ENCODE measurements at regions of chr22 and their contacts with region 1.

Region 1: GRCh38 chr22:30289134-30289979 is at the start of gene CASTOR1:
- DNase-seq: peak; percentile 84 to 98 (median 96)
- H3K4me3 ChIP-seq: peak within 1 kb of the TSS; percentile 67 to 97 (median 90)
- H3K27ac ChIP-seq: peak within 1 kb of the TSS; percentile 59 to 97 (median 92)
- H3K27me3 ChIP-seq: no peaks in the 10 kb centered on the region
- CTCF ChIP-seq: peak in 26 of 56 donors; percentile 8 to 56 (median 26)
- total RNA-seq, gene CASTOR1: 4.6 to 43.5 (median 15.5) TPM

Region 2: GRCh38 chr22:30079952-30080533 is 209.3 kb before region 1 on chr22 and contains the start of gene HORMAD2:
- intact Hi-C with region 1: no loop called
- DNase-seq: peak in 5 of 10 donors; percentile 19 to 64 (median 44)
- H3K4me3 ChIP-seq: peak within 1 kb of the TSS in 57 of 59 donors; percentile 6 to 66 (median 46)
- H3K27ac ChIP-seq: peak within 1 kb of the TSS in 1 of 59 donors; percentile 18
- H3K27me3 ChIP-seq: peaks cover 0 to 18% (median 4%) of the 10 kb centered on the region in 45 donors
- CTCF ChIP-seq: no peak
- total RNA-seq, gene HORMAD2: 0.20 to 2.0 (median 0.59) TPM in 46 of 120 experiments, not detected in the others

Region 3: DNA sequence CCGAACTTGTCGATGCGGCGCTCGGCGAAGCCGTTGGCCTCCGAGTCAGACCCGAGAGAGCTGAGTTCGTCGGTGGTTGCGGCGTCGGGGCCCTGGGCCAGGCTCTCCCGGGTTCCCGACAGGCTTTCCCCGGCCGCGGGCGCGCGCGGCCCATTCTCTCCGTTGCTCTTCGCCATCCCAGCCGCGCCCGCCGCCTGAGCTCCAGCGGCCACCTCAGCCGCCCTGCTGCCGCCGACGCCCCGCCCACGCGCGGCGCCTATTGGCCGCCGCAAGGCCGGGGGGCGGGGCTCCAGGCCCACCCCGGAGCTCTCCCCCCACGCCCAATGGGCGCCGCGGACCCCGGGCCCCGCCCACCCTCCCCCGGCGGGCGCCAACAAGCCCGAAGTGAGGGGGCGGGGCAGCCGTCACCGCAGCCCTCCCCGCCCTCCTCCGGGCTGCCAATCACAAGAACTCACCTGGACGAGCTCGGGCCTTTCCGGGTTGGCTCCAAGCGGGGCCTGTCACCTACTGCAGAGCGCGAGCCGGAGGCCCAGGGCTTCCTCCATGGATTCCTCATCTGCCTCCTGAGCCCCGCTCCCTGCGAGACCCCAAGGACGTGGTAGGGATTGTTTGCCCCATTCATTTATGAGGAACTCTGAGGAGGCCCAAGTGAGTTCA is 37.5 kb after region 1 on chr22 and contains the start of gene TBC1D10A:
- intact Hi-C with region 1: loop called (anchors 2 kb)
- DNase-seq: peak; percentile 63 to 92 (median 82)
- H3K4me3 ChIP-seq: peak within 1 kb of the TSS; percentile 54 to 98 (median 92)
- H3K27ac ChIP-seq: peak within 1 kb of the TSS in 57 of 59 donors; percentile 9 to 90 (median 78)
- H3K27me3 ChIP-seq: no peaks in the 10 kb centered on the region
- CTCF ChIP-seq: peak in 6 of 56 donors; percentile 10 to 24 (median 12)
- total RNA-seq, gene TBC1D10A: 8.7 to 34.6 (median 16.2) TPM

Region 4: GRCh38 chr22:30332561-30332960 is 43.2 kb after region 1 on chr22:
- intact Hi-C with region 1: loop called (anchors 2 kb)
- DNase-seq: peak in 5 of 10 donors; percentile 44 to 61 (median 53)
- H3K4me3 ChIP-seq: no peak overlapping the region
- H3K27ac ChIP-seq: peak overlapping the region in 30 of 59 donors; percentile 1 to 69 (median 34)
- H3K27me3 ChIP-seq: no peaks in the 10 kb centered on the region
- CTCF ChIP-seq: peak in 4 of 56 donors; percentile 2 to 25 (median 10)

Region 5: DNA sequence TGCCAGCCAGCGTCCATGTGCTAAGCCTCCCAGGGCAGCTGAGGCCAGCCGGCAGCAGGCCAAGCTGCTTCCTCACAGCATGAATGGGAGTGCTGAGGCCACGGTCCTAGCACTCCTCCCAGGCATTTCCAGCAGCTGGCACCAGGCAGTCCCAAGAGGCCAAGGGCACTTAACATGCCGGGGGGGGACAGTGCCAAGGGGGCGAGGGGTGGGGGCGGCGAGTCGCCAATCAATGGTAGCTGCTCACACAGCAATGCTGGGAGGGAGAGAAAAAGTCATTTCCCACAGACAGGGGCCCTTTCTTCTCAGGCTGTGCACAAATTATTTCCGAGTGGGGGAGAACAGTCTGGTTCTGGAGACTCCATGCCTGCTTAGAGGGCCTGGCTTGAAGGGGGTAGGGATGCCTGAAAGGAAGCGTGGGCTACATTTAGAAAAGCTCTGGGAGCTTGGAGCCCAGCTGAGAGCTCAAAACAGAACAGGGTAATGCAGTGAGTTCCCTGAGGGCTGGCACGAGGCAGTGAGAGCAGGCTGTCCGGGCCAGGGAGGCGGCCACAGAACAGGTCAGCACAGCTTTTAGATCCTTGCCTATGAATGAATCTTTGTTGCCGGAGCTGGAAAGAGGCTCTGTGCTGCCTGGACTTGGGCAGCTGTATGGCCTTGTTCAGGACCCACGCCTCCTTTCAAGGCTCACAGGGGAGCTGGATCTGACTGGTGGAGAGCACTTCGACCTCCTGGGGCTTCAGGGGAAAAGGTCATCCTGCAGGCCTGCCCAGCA is 51.7 kb after region 1 on chr22:
- intact Hi-C with region 1: loop called in 1 of 2 experiments (anchors 5 kb)
- DNase-seq: peak; percentile 32 to 84 (median 72)
- H3K4me3 ChIP-seq: peak overlapping the region in 1 of 59 donors; percentile 9
- H3K27ac ChIP-seq: peak overlapping the region in 58 of 59 donors; percentile 16 to 86 (median 66)
- H3K27me3 ChIP-seq: no peaks in the 10 kb centered on the region
- CTCF ChIP-seq: peak in 3 of 56 donors; percentile 8 to 11 (median 9)

Region 6: GRCh38 chr22:30356449-30357235 is 67.3 kb after region 1 on chr22 and contains the starts of genes CCDC157 and SF3A1:
- intact Hi-C with region 1: loop called (anchors 1 to 2 kb)
- DNase-seq: peak; percentile 77 to 94 (median 90)
- H3K4me3 ChIP-seq: peak within 1 kb of the TSS; percentile 69 to 100 (median 91)
- H3K27ac ChIP-seq: peak within 1 kb of the TSS; percentile 84 to 99 (median 97)
- H3K27me3 ChIP-seq: no peaks in the 10 kb centered on the region
- CTCF ChIP-seq: peak in 30 of 56 donors; percentile 8 to 61 (median 34)
- total RNA-seq, gene CCDC157: 1.9 to 13.1 (median 6.2) TPM
- total RNA-seq, gene SF3A1: 120 to 195 (median 158) TPM

Region 7: DNA sequence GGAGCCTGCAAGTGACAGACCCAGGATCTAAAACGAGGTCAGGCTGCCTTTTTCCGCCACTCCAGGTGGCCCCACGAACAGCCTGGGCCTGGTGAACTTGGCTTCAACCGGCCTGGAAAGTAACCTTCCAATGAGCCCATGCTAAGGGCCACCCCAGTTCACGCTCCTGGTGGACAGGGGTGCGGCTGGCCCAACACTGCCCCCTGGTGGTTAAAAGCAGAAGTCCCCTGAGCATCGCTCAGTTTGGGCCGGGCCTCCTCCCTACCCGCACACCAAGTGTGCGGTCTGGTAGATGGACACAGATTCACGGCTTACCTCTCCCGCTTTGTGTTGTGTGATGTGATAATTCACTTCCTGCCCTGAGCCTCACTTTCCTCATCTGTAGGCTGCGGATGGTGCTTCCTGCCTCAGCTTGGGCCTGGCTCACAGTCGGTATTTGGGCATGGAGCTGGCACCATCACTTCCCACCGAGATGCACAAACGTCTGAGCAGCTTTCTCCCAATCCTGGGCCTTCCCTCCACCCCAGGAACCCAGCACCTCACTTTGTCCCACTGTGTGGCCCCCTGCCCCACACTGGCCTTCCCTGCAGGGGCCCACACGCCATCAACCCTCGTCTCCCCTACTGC is 196.1 kb after region 1 on chr22:
- intact Hi-C with region 1: loop called in 1 of 2 experiments (anchors 2 kb)
- DNase-seq: peak; percentile 41 to 80 (median 55)
- H3K4me3 ChIP-seq: no peak overlapping the region
- H3K27ac ChIP-seq: no peak overlapping the region
- H3K27me3 ChIP-seq: no peaks in the 10 kb centered on the region
- CTCF ChIP-seq: peak; percentile 90 to 100 (median 98)

Measured in dorsolateral prefrontal cortex (tissue), 120 donors.